Endothelial cell of umbilical vein (primary cell): ENCODE measurements at regions of chr2 and their contacts with region 1.

Region 1: DNA sequence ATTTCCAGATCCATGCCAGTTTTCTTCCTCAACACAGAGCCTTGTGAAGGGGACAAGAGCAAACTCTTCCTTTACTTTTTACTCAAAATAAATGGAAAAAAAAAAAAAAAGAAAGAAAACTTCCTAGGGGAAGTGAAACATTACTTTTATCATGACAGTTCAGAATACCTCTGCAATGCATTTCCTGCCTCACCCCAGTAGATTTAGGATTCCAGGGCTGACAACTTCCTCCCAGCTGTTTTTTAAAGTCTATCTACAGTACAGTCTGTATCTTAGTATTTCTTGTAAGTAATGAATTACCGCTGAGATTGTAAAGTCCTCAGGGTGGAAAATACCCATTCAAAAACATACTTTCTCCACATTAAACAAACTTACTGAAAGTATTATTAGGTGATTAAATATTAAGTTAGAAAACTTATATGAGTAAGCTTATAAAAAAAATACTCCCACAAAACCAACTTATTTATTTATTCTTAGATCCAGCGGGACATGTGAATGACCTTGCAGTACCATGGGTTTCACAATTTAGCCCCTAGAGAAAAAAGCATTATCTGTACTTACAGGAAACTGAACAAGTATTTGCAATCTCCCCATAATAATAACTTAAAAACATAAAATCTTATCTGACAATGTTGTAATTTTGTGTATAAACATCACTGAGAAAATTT is 117.7 kb downstream of the RBMS1 start:
- DNase-seq: peak; percentile 66
- H3K4me3 ChIP-seq: peak overlapping the region in 1 of 3 experiments; percentile 22
- H3K27ac ChIP-seq: peak overlapping the region; percentile 85
- H3K4me1 ChIP-seq: peaks cover 97% of the 10 kb centered on the region
- H3K27me3 ChIP-seq: no peaks in the 10 kb centered on the region
- CTCF ChIP-seq: no peak
- POLR2A ChIP-seq: peak; percentile 58

Region 2: DNA sequence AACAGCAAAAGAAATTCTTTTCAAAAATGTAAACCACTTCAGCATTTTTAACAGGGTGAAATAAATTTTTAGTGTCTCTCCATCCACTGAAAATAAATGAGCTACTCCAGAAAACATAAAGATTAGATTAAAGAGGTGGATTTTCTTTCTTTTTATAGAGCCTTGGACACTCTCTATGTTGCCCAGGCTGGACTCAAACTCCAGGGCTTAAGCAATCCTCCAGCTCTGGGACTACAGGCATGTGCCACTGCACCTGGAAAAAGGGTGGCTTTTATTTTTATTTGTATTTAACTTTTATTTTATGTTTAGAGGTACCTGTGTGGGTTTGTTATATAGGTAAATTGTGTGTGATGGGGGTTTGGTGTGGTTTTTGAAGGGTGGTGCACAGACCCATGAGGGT is 195.8 kb before region 1 on chr2:
- CTCF ChIA-PET with region 1: no interaction called
- POLR2A ChIA-PET with region 1: no interaction called
- dilution Hi-C with region 1: no loop called
- intact Hi-C with region 1: no loop called
- DNase-seq: no peak
- H3K4me3 ChIP-seq: no peak overlapping the region
- H3K27ac ChIP-seq: no peak overlapping the region
- H3K4me1 ChIP-seq: peaks cover 6% of the 10 kb centered on the region
- H3K27me3 ChIP-seq: no peaks in the 10 kb centered on the region
- CTCF ChIP-seq: no peak
- POLR2A ChIP-seq: no peak

Region 3: GRCh38 chr2:160224060-160224459 is 151.9 kb before region 1 on chr2:
- CTCF ChIA-PET with region 1: no interaction called
- POLR2A ChIA-PET with region 1: no interaction called
- dilution Hi-C with region 1: no loop called
- intact Hi-C with region 1: loop called (anchors 2 kb)
- DNase-seq: peak; percentile 87
- H3K4me3 ChIP-seq: peak overlapping the region in 1 of 3 experiments; percentile 41
- H3K27ac ChIP-seq: peak overlapping the region; percentile 95
- H3K4me1 ChIP-seq: peaks cover 80% of the 10 kb centered on the region
- H3K27me3 ChIP-seq: no peaks in the 10 kb centered on the region
- CTCF ChIP-seq: no peak
- POLR2A ChIP-seq: no peak

Region 4: DNA sequence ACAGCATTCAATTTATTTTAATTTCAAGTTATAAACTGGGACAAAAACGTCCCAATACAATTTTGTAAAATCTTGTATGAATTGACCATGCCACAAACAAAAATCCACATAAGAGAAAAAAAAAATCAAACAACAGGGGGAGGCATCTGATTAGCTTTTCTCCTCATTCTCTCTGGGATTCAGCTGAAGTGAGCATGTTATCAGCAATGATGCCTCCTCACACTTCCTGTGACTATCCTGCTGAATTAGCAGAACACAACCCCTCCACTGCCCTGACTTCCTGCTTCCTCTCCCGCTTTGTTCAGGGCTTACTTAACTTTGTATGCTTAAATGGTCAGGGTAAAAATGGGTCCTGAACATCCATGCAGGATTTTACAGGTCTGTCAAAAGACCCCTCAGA is 43.6 kb before region 1 on chr2:
- CTCF ChIA-PET with region 1: interaction called, 12 read pairs
- POLR2A ChIA-PET with region 1: no interaction called
- dilution Hi-C with region 1: no loop called
- intact Hi-C with region 1: loop called (anchors 1 kb)
- DNase-seq: peak; percentile 70
- H3K4me3 ChIP-seq: no peak overlapping the region
- H3K27ac ChIP-seq: no peak overlapping the region
- H3K4me1 ChIP-seq: peaks cover 35% of the 10 kb centered on the region
- H3K27me3 ChIP-seq: no peaks in the 10 kb centered on the region
- CTCF ChIP-seq: peak in 1 of 2 donors; percentile 1
- POLR2A ChIP-seq: no peak

Region 5: DNA sequence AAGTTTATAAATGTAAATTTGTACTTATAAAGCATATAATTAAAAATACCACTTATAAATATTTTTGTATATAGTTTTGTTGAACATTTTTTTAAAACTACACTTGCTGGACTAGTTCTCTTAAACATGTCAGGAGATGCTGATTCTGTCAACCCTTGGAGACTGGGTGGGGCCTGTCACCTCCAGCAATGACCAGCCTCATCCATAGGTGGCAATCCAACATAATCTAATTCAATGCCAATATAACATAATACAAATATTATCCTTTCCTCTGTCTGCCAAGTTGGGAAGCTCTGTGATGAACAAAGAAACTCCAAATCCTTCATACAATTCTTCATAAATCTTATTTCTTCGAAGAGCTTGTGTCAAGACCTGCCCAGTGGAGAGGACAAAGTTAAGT is 22.8 kb before region 1 on chr2:
- CTCF ChIA-PET with region 1: interaction called, 11 read pairs
- POLR2A ChIA-PET with region 1: no interaction called
- dilution Hi-C with region 1: no loop called
- intact Hi-C with region 1: no loop called
- DNase-seq: peak; percentile 38
- H3K4me3 ChIP-seq: no peak overlapping the region
- H3K27ac ChIP-seq: no peak overlapping the region
- H3K4me1 ChIP-seq: peaks cover 3% of the 10 kb centered on the region
- H3K27me3 ChIP-seq: no peaks in the 10 kb centered on the region
- CTCF ChIP-seq: peak; percentile 28 to 31
- POLR2A ChIP-seq: no peak

Region 6: DNA sequence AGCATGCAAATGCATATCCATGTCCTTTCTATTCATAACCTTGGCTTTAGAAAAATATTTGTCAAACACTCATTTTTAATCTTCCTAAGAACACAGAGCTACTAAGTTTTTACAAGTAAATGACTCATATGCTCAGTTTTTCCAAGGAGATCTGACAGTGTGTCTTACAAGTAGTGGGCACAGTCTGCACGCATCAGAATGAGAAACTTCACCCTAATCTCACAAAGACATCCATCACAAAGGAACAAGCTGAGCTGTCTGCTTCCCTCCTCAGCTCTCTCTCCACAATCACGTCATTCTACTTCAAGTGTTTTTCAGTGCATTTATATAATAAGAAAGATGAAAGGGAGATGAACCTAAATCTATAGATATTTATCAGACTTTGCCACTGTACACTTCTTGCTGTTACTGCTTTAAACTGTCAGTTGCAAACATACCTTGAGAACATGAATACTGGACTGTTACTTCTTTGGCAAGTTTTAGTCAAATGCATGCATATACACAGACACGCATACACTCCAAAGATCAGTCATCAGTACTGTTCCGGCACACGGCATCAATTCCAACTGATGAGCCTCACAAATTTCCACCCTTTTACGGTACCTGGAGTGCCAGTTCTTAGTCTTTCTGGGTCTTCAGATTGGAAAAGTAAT is 41.9 kb after region 1 on chr2:
- CTCF ChIA-PET with region 1: interaction called, 3 read pairs
- POLR2A ChIA-PET with region 1: no interaction called
- dilution Hi-C with region 1: no loop called
- intact Hi-C with region 1: loop called (anchors 2 kb)
- DNase-seq: peak; percentile 84
- H3K4me3 ChIP-seq: peak overlapping the region in 1 of 3 experiments; percentile 55
- H3K27ac ChIP-seq: peak overlapping the region; percentile 97
- H3K4me1 ChIP-seq: peaks cover 51% of the 10 kb centered on the region
- H3K27me3 ChIP-seq: no peaks in the 10 kb centered on the region
- CTCF ChIP-seq: no peak
- POLR2A ChIP-seq: peak; percentile 53